Activated T-helper 1 cell treated with anti-CD3 and anti-CD28 coated beads, Interleukin-12 subunit alpha, Interleukin-12 subunit beta, Interleukin-2, Interleukin-4 antibody, amounts not matched to agents 30 ng/mL and 10 ng/mL and 1 ng/mL, durations not matched to agents 14 hours and 24 hours and 36 hours (primary cell): ENCODE measurements at regions of chr3 and their contacts with region 1.

Region 1: GRCh38 chr3:183099026-183099837 is at the start of gene MCCC1:
- DNase-seq: peak; percentile 97
- H3K4me3 Mint-ChIP-seq: peak within 1 kb of the TSS; percentile 97
- H3K27ac Mint-ChIP-seq: peak within 1 kb of the TSS; percentile 92
- H3K4me1 Mint-ChIP-seq: peaks cover 41% of the 10 kb centered on the region
- H3K27me3 Mint-ChIP-seq: no peaks in the 10 kb centered on the region
- total RNA-seq, gene MCCC1: 27.3 and 30.0 TPM in 2 replicates

Region 2: DNA sequence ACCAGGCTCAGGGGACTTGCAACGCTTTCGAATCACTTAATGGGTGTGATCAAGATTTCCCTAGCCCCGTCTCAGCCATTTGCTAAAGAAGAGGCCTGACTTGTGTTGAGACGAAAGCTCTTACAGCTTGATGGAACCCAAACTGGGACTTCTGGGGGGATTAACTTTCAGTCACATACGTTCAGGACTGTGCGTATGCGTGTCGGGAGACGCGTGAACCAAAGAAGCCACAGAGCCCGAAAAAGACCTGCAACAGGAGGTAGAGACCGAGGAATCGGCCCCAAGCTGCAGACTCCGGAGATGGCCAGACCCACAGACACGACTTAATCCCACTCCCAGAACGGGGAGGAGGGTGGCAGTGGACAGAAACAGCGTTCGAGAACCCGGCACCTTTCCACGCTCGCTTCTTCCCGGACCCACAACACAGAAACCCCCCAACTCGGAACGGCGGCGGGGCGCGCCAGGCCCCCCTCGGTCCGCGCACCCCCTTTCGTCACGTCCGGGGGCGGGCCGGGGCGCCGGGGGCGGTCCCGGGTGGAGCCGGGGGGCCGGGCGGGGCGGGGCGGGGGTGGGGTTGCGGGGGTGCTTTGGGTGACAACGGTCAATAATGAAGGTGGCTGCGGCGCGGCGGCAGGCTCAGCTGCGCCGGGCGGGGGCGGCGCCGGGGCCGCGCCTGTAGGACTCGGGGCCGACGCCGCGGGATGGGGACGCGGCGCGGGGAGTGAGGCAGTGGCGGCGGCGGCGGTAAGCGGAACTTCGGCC is 306.1 kb before region 1 on chr3 and contains the start of gene ATP11B:
- intact Hi-C with region 1: loop called (anchors 1 kb)
- DNase-seq: peak; percentile 75
- H3K4me3 Mint-ChIP-seq: peak within 1 kb of the TSS; percentile 94
- H3K27ac Mint-ChIP-seq: peak within 1 kb of the TSS; percentile 98
- H3K4me1 Mint-ChIP-seq: peaks cover 34% of the 10 kb centered on the region
- H3K27me3 Mint-ChIP-seq: no peaks in the 10 kb centered on the region
- total RNA-seq, gene ATP11B: 92.3 and 95.1 TPM in 2 replicates

Region 3: GRCh38 chr3:182814419-182815062 is 284.7 kb before region 1 on chr3:
- intact Hi-C with region 1: no loop called
- DNase-seq: no peak
- H3K4me3 Mint-ChIP-seq: no peak overlapping the region
- H3K27ac Mint-ChIP-seq: no peak overlapping the region
- H3K4me1 Mint-ChIP-seq: peaks cover 21% of the 10 kb centered on the region
- H3K27me3 Mint-ChIP-seq: no peaks in the 10 kb centered on the region

Region 4: DNA sequence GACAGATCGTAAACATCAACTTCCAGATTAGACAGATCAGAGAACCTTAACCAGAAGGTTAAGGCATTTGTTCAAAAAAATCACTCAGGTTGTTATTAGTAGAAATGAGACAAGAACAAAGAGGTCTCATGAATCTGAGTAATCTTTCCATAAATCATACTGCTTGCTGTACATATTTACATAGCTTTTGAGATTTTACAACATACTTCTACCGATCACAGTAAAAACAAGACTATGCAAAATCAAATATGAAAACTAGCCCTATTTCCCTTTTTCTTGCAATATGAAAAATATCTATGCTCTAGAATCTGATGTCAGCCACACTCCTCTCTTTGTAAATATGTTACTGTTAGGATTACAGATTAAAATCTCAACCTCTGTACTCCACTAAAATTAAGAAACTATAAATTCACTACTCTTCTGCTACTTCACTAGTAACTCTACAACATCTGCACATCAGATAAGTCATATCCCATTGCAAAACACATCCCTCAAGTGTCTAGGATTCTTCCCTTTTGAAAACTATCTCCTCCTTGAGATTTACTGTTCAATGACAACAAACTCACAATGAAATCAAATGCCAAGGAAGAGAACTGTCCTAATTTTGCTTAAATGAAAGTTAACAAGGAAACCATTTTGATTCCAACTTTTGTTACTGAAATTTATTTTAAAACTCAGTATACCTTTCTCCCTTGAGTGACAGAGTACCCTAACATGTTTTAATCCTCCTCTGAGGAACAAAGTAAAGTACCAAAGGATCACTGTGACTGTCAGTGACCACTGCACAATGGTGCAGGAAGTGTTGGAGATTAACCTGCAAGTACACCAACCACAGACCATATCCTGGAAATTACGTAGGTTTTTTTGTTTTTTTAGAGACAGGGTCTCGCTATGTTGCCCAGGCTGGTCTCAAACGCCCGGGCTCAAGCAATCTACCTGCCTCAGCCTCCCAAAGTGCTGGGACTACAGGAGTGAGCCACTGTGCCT is 131.7 kb before region 1 on chr3:
- intact Hi-C with region 1: loop called (anchors 5 kb)
- DNase-seq: no peak
- H3K4me3 Mint-ChIP-seq: peak overlapping the region; percentile 55
- H3K27ac Mint-ChIP-seq: peak overlapping the region; percentile 79
- H3K4me1 Mint-ChIP-seq: peaks cover 62% of the 10 kb centered on the region
- H3K27me3 Mint-ChIP-seq: no peaks in the 10 kb centered on the region

Region 5: DNA sequence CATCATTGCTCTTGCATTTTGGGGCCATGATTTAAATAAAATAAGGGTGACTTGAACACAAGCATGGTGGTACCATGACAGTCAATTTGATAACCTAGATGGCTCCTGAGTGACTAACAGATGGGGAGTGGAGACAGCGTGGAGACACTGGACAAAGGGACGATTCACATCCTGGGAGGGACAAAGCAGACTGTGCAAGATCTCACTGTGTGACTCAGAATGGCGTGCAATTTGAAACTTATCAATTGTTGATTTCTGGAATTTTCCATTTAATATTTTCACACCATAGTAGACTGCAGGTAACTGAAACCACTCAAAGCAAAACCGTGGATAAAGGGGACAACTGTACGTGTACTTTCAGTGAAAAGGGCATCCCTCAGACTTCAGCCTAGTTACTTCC is 25.4 kb before region 1 on chr3:
- intact Hi-C with region 1: no loop called
- DNase-seq: no peak
- H3K4me3 Mint-ChIP-seq: no peak overlapping the region
- H3K27ac Mint-ChIP-seq: no peak overlapping the region
- H3K4me1 Mint-ChIP-seq: peaks cover 11% of the 10 kb centered on the region
- H3K27me3 Mint-ChIP-seq: no peaks in the 10 kb centered on the region

Region 6: GRCh38 chr3:183158551-183159006 is 59.3 kb after region 1 on chr3:
- intact Hi-C with region 1: loop called (anchors 1 kb)
- DNase-seq: peak; percentile 33
- H3K4me3 Mint-ChIP-seq: peak overlapping the region; percentile 45
- H3K27ac Mint-ChIP-seq: peak overlapping the region; percentile 73
- H3K4me1 Mint-ChIP-seq: peaks cover 48% of the 10 kb centered on the region
- H3K27me3 Mint-ChIP-seq: no peaks in the 10 kb centered on the region

Region 7: GRCh38 chr3:184185461-184186308 is 1086.5 kb after region 1 on chr3 and contains the start of gene ABCF3:
- intact Hi-C with region 1: loop called (anchors 2 kb)
- DNase-seq: peak; percentile 99
- H3K4me3 Mint-ChIP-seq: peak within 1 kb of the TSS; percentile 98
- H3K27ac Mint-ChIP-seq: peak within 1 kb of the TSS; percentile 89
- H3K4me1 Mint-ChIP-seq: peaks cover 25% of the 10 kb centered on the region
- H3K27me3 Mint-ChIP-seq: no peaks in the 10 kb centered on the region
- total RNA-seq, gene ABCF3: 75.2 and 76.4 TPM in 2 replicates